HepG2 (cell line): ENCODE measurements at regions of chr19 and their contacts with region 1.

Region 1: GRCh38 chr19:12333162-12334159 is at the start of gene ZNF563:
- DNase-seq: peak; percentile 94
- ATAC-seq: peak; percentile 94
- H3K4me3 ChIP-seq: peak within 1 kb of the TSS; percentile 95 to 99 (median 98)
- H3K27ac ChIP-seq: peak within 1 kb of the TSS; percentile 95
- H3K4me1 ChIP-seq: peaks cover 43% of the 10 kb centered on the region
- H3K27me3 ChIP-seq: no peaks in the 10 kb centered on the region; a peak in 1 of 5 replicates
- CTCF ChIP-seq: no peak; the same call in 1 of the 2 replicates
- EP300 ChIP-seq: 0 out of 4 replicates have a peak, but pooled peaks of 1 of the 2 experiments have one; percentile 44
- POLR2A ChIP-seq: peak; percentile 97 to 98
- RAD21 ChIP-seq: peak; percentile 42
- total RNA-seq, gene ZNF563: 19.5 and 26.3 TPM in 2 replicates

Region 2: DNA sequence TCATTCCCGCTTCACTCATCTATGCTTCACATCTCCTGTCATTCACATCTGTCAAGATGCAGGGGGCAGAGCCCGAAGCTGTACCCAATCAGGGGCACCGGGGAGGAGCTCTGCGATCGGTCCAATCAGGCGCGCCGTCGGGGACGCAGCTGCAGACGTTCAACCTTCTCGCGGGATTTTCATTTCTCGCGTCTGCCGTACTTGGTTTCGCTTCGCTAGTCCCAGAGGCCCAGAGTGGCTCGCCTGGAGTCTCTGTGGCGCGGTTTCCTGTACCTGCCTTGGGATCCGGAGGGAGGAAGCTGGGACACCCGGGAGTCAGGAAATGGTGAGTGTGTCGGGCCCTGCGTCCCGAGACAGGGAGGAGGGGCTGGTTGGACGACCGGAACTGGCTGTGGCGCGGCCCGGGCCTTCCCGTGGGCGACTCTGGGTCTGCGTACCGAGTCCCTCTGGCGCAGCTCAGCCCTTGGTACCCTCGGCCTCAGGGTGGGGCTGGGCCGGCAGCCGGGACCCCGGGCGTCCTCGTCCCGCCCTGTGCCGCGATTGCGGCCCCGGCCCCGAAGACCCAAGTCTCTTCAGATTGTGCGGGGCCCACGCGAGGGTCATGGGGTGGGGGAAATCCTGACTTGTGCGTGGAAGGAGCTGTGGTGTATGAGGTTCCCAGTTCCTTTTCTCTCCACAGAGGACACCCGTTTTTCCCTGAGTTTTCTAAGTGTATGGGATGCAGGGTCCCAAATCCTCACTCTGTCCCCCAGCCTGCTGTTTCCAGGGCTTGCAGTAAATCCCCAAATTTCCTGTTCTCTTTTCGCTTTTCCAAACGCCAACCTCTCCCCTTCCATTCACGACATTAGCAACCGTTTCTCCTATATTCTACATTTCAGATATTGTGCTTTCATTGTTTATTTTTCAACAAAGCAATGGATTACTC is 170.3 kb before region 1 on chr19 and contains the start of gene ZNF136:
- CTCF ChIA-PET with region 1: no interaction called
- POLR2A ChIA-PET with region 1: interaction called, 16 read pairs
- in situ Hi-C with region 1: no loop called
- intact Hi-C with region 1: no loop called
- DNase-seq: peak; percentile 94
- ATAC-seq: peak; percentile 96
- H3K4me3 ChIP-seq: peak within 1 kb of the TSS; percentile 72 to 92 (median 90)
- H3K27ac ChIP-seq: peak within 1 kb of the TSS; percentile 94
- H3K4me1 ChIP-seq: peaks cover 60% of the 10 kb centered on the region
- H3K27me3 ChIP-seq: no peaks in the 10 kb centered on the region; a peak in 1 of 5 replicates
- CTCF ChIP-seq: 0 out of 2 replicates have a peak, but pooled peaks have one; percentile 7
- EP300 ChIP-seq: no peak
- POLR2A ChIP-seq: peak; percentile 77 to 81
- RAD21 ChIP-seq: no peak
- total RNA-seq, gene ZNF136: 10.2 and 16.6 TPM in 2 replicates

Region 3: GRCh38 chr19:12294249-12295158 is 39.0 kb before region 1 on chr19 and contains the start of gene ZNF44:
- CTCF ChIA-PET with region 1: no interaction called
- POLR2A ChIA-PET with region 1: interaction called, 78 read pairs
- in situ Hi-C with region 1: loop called (anchors 5 kb)
- intact Hi-C with region 1: loop called (anchors 1 kb)
- DNase-seq: peak; percentile 99
- ATAC-seq: peak; percentile 94
- H3K4me3 ChIP-seq: peak within 1 kb of the TSS; percentile 83 to 97 (median 89)
- H3K27ac ChIP-seq: peak within 1 kb of the TSS; percentile 91
- H3K4me1 ChIP-seq: peaks cover 39% of the 10 kb centered on the region
- H3K27me3 ChIP-seq: no peaks in the 10 kb centered on the region
- CTCF ChIP-seq: peak; percentile 24; the same call in 1 of the 2 replicates
- EP300 ChIP-seq: 0 out of 4 replicates have a peak, but pooled peaks of 1 of the 2 experiments have one; percentile 15
- POLR2A ChIP-seq: peak; percentile 89 to 94
- RAD21 ChIP-seq: peak; percentile 34; the same call in 1 of the 2 replicates
- total RNA-seq, gene ZNF44: 15.7 and 16.6 TPM in 2 replicates

Region 4: DNA sequence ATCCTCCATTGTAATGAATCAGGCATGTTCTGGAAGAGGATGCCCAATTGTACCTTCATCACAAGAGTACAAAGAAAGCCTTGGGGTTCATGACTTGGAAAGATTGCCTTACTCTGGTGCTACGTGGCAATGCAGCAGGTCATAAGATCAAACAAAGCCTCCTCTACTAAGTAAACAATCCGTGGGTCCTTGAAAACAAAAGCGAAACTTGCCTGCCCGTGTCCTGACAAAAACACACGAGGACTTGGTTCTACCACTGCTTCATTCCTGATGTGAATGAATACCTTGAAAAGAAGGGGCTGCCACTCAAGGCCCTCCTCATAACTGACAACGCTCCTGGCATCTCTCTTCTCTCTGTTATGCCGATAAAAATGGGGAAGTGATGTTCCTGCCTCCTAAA is 18.9 kb before region 1 on chr19:
- CTCF ChIA-PET with region 1: no interaction called
- POLR2A ChIA-PET with region 1: interaction called, 26 read pairs
- in situ Hi-C with region 1: no loop called
- intact Hi-C with region 1: no loop called
- DNase-seq: peak; percentile 85
- ATAC-seq: peak; percentile 79
- H3K4me3 ChIP-seq: peak overlapping the region in 2 of 3 experiments; percentile 34 to 38; a peak in 2 of 6 replicates
- H3K27ac ChIP-seq: peak overlapping the region; percentile 75
- H3K4me1 ChIP-seq: peaks cover 25% of the 10 kb centered on the region
- H3K27me3 ChIP-seq: no peaks in the 10 kb centered on the region
- CTCF ChIP-seq: no peak
- EP300 ChIP-seq: no peak
- POLR2A ChIP-seq: no peak
- RAD21 ChIP-seq: no peak

Region 5: DNA sequence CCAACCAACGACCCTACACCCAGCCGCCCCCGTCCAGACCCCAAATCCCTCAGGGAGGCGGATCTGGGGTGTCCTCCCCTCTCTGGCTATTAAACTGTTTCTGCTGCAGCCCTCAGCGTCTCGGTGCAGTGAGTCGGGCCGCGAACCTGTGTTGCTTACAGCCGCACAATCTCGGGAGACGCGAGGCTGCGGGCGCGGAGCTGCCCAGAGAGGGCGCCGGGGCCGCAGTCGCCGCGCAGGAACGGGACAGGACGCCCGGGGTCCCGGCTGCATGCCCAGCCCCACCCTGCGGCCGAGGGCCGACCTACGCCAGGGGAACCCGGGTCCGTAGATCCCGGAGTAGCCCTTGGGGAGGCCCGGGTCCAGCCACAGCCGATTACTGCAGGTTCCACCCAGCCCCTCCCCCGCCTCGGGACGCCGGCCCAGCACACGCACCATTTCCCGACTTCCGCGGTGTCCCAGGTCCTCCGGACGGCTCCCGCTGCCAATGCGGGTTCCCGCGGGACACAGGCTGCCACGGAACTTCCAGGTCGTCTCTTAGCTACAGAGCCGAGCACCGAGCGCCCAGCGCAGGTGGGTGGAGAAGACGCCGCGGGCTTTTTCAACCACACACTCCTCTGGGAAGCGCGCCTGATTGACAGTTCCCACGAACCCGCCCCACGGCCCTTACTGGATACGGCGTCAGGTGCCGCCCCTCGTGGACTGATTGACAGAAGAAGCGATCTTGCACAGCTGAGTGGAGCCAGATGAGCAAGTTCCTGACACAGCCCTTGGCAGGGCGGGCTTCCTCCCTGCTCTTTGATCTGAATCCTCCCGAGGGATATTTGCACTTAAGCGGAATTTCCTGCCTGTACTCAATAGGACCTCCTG is 67.4 kb after region 1 on chr19 and contains the start of gene ZNF799:
- CTCF ChIA-PET with region 1: no interaction called
- POLR2A ChIA-PET with region 1: interaction called, 12 read pairs
- in situ Hi-C with region 1: no loop called
- intact Hi-C with region 1: no loop called
- DNase-seq: peak; percentile 100
- ATAC-seq: peak; percentile 95
- H3K4me3 ChIP-seq: peak within 1 kb of the TSS; percentile 79 to 96 (median 92)
- H3K27ac ChIP-seq: peak within 1 kb of the TSS; percentile 88
- H3K4me1 ChIP-seq: peaks cover 26% of the 10 kb centered on the region
- H3K27me3 ChIP-seq: no peaks in the 10 kb centered on the region
- CTCF ChIP-seq: peak; percentile 17; the same call in 1 of the 2 replicates
- EP300 ChIP-seq: peak; percentile 59 to 61; a peak in 3 of 4 replicates
- POLR2A ChIP-seq: peak; percentile 78 to 83
- RAD21 ChIP-seq: peak; percentile 27; the same call in 1 of the 2 replicates
- total RNA-seq, gene ZNF799: 17.9 and 27.0 TPM in 2 replicates

Region 6: GRCh38 chr19:12495002-12495802 is 161.7 kb after region 1 on chr19:
- CTCF ChIA-PET with region 1: no interaction called
- POLR2A ChIA-PET with region 1: interaction called, 13 read pairs
- in situ Hi-C with region 1: no loop called
- intact Hi-C with region 1: no loop called
- DNase-seq: peak; percentile 95
- ATAC-seq: peak; percentile 94
- H3K4me3 ChIP-seq: peak overlapping the region; percentile 87 to 94 (median 91)
- H3K27ac ChIP-seq: peak overlapping the region; percentile 90
- H3K4me1 ChIP-seq: peaks cover 29% of the 10 kb centered on the region
- H3K27me3 ChIP-seq: no peaks in the 10 kb centered on the region; a peak in 1 of 5 replicates
- CTCF ChIP-seq: peak; percentile 93
- EP300 ChIP-seq: no peak
- POLR2A ChIP-seq: peak; percentile 97
- RAD21 ChIP-seq: peak; percentile 75

Region 7: DNA sequence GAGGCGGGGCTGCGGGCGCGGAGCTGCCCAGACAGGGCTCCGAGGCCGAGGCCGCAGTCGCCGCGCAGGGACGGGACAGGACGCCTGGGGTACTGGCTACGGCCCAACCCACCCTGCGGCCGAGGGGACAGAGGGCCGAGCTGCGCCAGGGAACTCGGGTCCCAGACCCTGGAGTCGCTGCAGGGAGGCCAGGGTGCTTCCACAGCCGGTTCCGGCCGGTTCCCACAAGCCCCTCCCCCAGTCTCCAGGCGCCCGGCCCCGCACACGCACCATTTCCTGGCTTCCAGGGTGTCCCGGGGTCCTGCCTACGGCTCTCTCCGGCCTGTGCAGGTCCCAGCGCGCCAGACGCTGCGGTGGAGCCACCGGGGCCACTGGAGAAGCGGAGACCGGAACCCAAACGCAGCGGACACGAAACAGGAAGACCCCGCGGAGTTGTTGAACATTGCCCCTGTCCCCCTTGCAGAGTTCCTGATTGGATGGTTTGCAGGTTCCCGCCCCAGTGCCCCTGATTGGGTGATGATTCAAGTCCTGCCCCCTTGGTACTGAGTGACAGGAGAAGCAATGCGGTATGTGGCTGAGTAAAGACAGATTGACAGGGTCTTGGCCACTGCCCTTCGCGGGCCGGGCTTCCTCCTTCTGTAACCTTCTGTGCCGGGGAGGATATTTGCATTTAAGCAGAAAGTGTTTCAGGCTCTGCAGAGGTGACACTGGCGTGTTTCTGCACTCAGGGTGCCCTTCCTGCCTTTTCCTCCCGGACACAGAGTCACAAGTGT is 217.8 kb after region 1 on chr19 and contains the start of gene ZNF564:
- CTCF ChIA-PET with region 1: no interaction called
- POLR2A ChIA-PET with region 1: no interaction called
- in situ Hi-C with region 1: no loop called
- intact Hi-C with region 1: loop called (anchors 5 kb)
- DNase-seq: peak; percentile 100
- ATAC-seq: peak; percentile 96
- H3K4me3 ChIP-seq: peak within 1 kb of the TSS; percentile 86 to 92 (median 91)
- H3K27ac ChIP-seq: peak within 1 kb of the TSS; percentile 93
- H3K4me1 ChIP-seq: peaks cover 44% of the 10 kb centered on the region
- H3K27me3 ChIP-seq: no peaks in the 10 kb centered on the region; a peak in 1 of 5 replicates
- CTCF ChIP-seq: peak; percentile 6; the same call in 1 of the 2 replicates
- EP300 ChIP-seq: peak in 1 of 2 experiments; percentile 22; a peak in 2 of 4 replicates
- POLR2A ChIP-seq: peak; percentile 80 to 95
- RAD21 ChIP-seq: 0 out of 2 replicates have a peak, but pooled peaks have one; percentile 26
- total RNA-seq, gene ZNF564: 11.1 and 11.2 TPM in 2 replicates